Endothelial cell of umbilical vein (primary cell): ENCODE measurements at regions of chr16 and their contacts with region 1.

Region 1: GRCh38 chr16:70402916-70403659 is 35.8 kb downstream of the ST3GAL2 start:
- DNase-seq: no peak
- H3K4me3 ChIP-seq: no peak overlapping the region
- H3K27ac ChIP-seq: no peak overlapping the region
- H3K4me1 ChIP-seq: peaks cover 10% of the 10 kb centered on the region
- H3K27me3 ChIP-seq: no peaks in the 10 kb centered on the region
- CTCF ChIP-seq: no peak
- POLR2A ChIP-seq: no peak

Region 2: DNA sequence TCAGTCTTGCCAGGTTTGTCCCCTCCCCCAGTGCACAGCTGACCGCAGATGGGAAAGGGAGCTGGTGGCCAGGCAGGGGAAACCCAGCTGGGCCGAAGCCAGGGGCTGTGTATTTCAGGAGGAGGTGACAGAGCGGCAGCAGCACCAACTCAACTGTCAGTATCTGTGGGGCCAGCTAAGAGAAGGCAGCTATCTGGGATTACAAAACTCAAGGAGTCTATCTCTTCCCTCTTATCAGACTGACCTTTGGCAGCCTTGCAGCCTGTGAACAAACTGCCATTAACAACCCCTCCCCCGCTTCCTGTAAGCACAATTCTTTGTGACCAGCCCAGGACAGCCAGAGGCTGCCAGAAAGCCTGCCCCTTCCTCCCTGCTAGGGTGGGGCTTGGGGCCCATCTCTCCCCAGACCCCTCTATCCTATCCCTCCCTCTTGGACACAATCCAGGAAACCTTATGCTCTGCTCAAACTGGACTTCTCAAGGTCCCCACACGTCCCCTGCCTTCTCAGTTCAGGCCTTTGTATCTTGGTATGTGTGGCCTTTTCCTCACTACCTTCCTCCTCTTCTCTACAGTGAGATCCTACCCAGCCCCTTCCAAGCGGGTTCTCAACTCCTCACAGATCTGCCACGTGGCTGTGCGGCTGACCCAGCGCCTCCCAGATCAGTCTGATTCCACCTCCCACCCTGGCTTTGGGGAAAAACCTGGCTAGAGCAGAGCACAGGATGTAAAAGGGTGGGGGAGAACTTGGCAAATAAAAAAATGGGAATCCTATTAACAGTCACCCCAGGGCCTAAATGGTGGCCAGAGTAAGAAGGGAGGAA is 25.3 kb after region 1 on chr16:
- CTCF ChIA-PET with region 1: interaction called, 4 read pairs
- POLR2A ChIA-PET with region 1: no interaction called
- dilution Hi-C with region 1: no loop called
- intact Hi-C with region 1: loop called (anchors 1 kb)
- DNase-seq: peak; percentile 96
- H3K4me3 ChIP-seq: no peak overlapping the region
- H3K27ac ChIP-seq: peak overlapping the region; percentile 86
- H3K4me1 ChIP-seq: peaks cover 54% of the 10 kb centered on the region
- H3K27me3 ChIP-seq: no peaks in the 10 kb centered on the region
- CTCF ChIP-seq: no peak
- POLR2A ChIP-seq: peak; percentile 77

Region 3: DNA sequence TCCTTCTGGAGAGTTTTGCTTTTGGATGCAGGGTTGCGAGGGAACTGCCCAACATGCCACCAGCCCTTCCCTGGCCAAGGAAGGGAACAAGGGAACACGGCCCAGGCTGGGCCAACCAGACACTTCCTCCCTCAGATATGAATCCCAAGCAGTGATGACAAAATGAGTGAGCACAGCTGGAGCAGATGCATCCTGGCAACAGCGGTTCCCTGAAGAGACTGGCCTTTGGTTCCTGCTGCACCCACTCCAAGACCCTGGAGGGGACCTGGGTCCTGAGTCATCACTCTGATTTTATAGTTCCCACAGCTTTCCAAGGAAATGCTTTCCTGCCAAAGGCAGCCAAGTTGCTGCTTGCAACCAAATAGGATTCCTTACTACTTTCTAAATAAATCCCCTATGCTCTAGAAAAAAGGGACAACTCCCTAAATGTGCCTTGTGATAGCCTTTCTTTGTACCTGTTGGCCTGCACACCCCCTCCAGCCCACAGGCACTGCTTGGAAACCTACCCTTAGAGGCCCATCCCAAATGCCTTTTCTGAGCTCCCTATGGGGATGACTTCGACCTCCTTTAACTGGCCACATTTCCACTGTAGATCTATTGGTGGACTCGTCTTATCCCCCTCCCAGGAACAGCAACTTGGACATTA is 30.5 kb after region 1 on chr16:
- CTCF ChIA-PET with region 1: interaction called, 3 read pairs
- POLR2A ChIA-PET with region 1: no interaction called
- dilution Hi-C with region 1: no loop called
- intact Hi-C with region 1: loop called (anchors 1 kb)
- DNase-seq: peak; percentile 89
- H3K4me3 ChIP-seq: no peak overlapping the region
- H3K27ac ChIP-seq: peak overlapping the region; percentile 76
- H3K4me1 ChIP-seq: peaks cover 69% of the 10 kb centered on the region
- H3K27me3 ChIP-seq: no peaks in the 10 kb centered on the region
- CTCF ChIP-seq: no peak
- POLR2A ChIP-seq: no peak